Activated naive CD8-positive, alpha-beta T cell treated with anti-CD3 and anti-CD28 coated beads, Interleukin-2, amount 10 ng/mL, durations not matched to agents 7 days and 5 days (primary cell): ENCODE measurements at regions of chr4 and their contacts with region 1.

Region 1: GRCh38 chr4:98995183-98996055 is at the start of gene METAP1:
- DNase-seq: peak; percentile 96
- ATAC-seq: peak; percentile 94
- H3K4me3 Mint-ChIP-seq: peak within 1 kb of the TSS; percentile 95
- H3K27ac Mint-ChIP-seq: peak within 1 kb of the TSS; percentile 100
- H3K4me1 Mint-ChIP-seq: peaks cover 20% of the 10 kb centered on the region
- H3K27me3 Mint-ChIP-seq: no peaks in the 10 kb centered on the region
- total RNA-seq, gene METAP1: 50.8 to 51.7 TPM

Region 2: DNA sequence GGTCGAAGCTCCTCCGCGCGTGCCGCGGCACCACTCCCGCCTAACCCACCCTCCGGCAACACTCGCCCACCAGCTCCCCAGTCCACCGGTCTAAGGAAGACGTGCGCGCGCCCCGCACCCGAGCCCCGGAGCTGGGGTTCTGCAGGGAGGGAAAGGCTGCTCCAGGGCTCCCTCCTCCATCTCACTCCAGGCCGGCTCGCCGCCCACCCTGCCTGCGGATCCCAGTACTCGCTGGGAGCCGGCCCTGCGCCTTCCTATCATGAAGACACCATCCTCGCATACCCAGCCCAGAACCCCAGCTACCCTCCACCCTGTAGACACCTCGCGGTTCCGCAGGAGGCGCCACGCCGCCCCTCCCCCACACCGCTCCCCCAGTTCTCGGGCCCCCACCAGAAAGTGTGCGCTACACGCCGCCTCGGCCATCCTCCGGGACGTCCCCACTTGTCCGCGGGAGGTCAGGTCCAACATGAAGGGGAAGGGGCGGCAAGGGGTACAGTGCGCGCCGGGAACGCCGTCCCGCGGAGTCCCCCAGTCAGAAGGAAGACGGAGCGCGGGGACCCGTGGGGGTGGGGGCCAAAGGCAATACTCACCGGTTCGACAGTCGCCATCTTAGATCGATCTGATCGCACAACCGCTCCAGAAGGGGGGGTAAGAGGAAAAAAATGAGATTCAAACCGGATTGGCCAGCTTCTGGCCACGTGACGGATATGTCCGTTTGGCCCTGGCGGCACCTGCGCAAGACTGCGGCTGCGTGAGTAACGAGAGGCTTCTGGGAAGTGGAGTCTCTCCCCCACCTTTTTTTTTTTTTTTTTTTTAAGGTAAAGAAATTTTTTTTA is 66.7 kb before region 1 on chr4 and contains the start of gene EIF4E:
- POLR2A ChIA-PET with region 1: interaction called, 51 read pairs
- DNase-seq: peak; percentile 89
- ATAC-seq: peak; percentile 81
- H3K4me3 Mint-ChIP-seq: peak within 1 kb of the TSS; percentile 97
- H3K27ac Mint-ChIP-seq: peak within 1 kb of the TSS; percentile 98
- H3K4me1 Mint-ChIP-seq: peaks cover 20% of the 10 kb centered on the region
- H3K27me3 Mint-ChIP-seq: no peaks in the 10 kb centered on the region
- total RNA-seq, gene EIF4E: 77.5 to 88.6 TPM

Region 3: GRCh38 chr4:98963538-98964433 is 31.6 kb before region 1 on chr4:
- POLR2A ChIA-PET with region 1: no interaction called
- DNase-seq: no peak
- ATAC-seq: no peak
- H3K4me3 Mint-ChIP-seq: no peak overlapping the region
- H3K27ac Mint-ChIP-seq: no peak overlapping the region
- H3K4me1 Mint-ChIP-seq: no peaks in the 10 kb centered on the region
- H3K27me3 Mint-ChIP-seq: peaks cover 2% of the 10 kb centered on the region

Region 4: GRCh38 chr4:99043346-99043745 is 47.9 kb after region 1 on chr4:
- POLR2A ChIA-PET with region 1: interaction called, 12 read pairs
- DNase-seq: no peak
- ATAC-seq: peak; percentile 90
- H3K4me3 Mint-ChIP-seq: peak overlapping the region; percentile 60
- H3K27ac Mint-ChIP-seq: peak overlapping the region; percentile 84
- H3K4me1 Mint-ChIP-seq: peaks cover 13% of the 10 kb centered on the region
- H3K27me3 Mint-ChIP-seq: no peaks in the 10 kb centered on the region

Region 5: GRCh38 chr4:99054428-99054994 is 59.1 kb after region 1 on chr4:
- POLR2A ChIA-PET with region 1: interaction called, 30 read pairs
- DNase-seq: no peak
- ATAC-seq: no peak
- H3K4me3 Mint-ChIP-seq: no peak overlapping the region
- H3K27ac Mint-ChIP-seq: peak overlapping the region; percentile 54
- H3K4me1 Mint-ChIP-seq: peaks cover 27% of the 10 kb centered on the region
- H3K27me3 Mint-ChIP-seq: no peaks in the 10 kb centered on the region

Region 6: GRCh38 chr4:99076292-99076976 is 81.0 kb after region 1 on chr4:
- POLR2A ChIA-PET with region 1: no interaction called
- DNase-seq: no peak
- ATAC-seq: no peak
- H3K4me3 Mint-ChIP-seq: no peak overlapping the region
- H3K27ac Mint-ChIP-seq: no peak overlapping the region
- H3K4me1 Mint-ChIP-seq: peaks cover 3% of the 10 kb centered on the region
- H3K27me3 Mint-ChIP-seq: no peaks in the 10 kb centered on the region

Region 7: DNA sequence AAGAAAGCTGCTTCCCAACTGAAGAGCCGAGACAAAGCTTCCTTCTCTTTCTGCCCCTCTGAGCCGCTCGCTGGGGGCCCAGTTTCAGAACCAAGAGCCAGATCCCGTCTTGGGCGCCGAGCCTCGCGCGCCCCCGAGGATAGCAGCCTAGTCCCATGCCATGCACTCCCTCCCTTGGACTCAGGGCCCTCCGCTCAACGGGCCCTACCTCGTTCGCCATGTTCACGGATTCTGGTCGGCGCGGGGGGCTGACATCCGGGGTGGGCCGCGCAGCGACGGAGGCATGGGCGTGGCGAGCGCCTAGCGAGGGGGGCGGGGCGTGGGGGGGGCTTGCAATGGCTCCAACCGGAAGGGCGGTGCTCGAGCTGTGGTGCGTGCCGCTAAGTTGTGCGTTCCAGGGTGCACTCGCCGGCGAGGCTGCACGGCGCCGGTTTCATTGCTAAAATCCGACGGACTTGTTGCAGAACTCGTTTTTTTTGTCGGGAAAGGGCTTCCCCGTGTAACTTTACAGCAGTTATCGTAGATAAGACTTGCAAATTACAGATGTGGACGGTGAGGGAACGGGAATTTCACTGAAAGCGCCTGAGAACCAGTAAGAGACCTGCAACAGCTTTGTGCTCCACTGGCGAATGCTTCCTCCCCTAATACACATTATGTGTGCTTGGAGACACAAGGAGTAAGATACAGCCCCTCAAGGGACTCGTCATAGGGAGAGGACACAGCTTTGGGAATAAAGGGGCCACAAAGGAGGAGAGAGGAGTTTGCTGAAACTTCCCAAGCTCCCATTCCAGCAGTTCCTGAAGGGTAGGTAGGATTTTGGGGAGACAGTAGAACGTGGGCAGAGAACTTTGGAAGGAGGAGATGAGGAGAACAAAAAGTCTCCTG is 93.3 kb after region 1 on chr4 and contains the start of gene ADH5:
- POLR2A ChIA-PET with region 1: interaction called, 58 read pairs
- DNase-seq: peak; percentile 89
- ATAC-seq: peak; percentile 97
- H3K4me3 Mint-ChIP-seq: peak within 1 kb of the TSS; percentile 95
- H3K27ac Mint-ChIP-seq: peak within 1 kb of the TSS; percentile 98
- H3K4me1 Mint-ChIP-seq: peaks cover 29% of the 10 kb centered on the region
- H3K27me3 Mint-ChIP-seq: no peaks in the 10 kb centered on the region
- total RNA-seq, gene ADH5: 97.1 to 103 TPM